ENCODE measurements at regions of chr17 and their contacts with region 1.

Region 1: DNA sequence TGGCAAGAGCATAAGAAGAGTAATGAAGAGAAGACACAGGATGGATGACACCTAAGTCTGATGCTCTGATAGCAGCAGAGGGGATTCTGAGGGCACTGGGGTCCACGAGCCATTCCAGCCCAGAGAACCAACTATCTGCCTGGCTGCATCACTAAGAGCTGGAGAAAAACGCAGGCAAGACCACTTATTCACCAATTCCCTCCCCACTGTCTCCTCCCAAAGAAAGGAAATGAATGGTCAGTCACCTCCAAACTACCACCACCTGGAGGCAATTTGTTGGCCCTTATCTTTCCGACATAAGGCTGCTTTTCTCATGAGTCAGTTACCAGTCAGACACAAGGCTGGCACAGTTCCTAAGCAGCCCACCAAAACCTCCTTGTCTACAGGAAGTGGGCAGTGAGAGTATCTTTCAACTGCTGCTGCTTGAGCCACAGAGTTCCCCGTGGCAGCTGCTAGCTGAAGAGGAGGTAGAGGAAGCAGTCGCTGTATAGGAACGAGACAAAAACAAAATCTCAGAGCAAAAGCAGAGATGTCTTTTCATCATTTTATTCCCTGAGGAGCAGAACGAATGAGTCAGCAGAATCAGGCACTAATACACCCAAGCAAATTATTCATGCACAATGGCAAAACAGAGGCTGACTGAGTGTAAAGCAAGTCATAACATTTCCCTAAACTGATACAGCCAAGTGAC is 111.1 kb downstream of the SMG6 start:
- DNase-seq: no peak
- H3K4me3 Mint-ChIP-seq: no peak overlapping the region
- H3K27ac Mint-ChIP-seq: peak overlapping the region; percentile 82
- H3K4me1 Mint-ChIP-seq: peaks cover 62% of the 10 kb centered on the region
- H3K27me3 Mint-ChIP-seq: no peaks in the 10 kb centered on the region

Region 2: DNA sequence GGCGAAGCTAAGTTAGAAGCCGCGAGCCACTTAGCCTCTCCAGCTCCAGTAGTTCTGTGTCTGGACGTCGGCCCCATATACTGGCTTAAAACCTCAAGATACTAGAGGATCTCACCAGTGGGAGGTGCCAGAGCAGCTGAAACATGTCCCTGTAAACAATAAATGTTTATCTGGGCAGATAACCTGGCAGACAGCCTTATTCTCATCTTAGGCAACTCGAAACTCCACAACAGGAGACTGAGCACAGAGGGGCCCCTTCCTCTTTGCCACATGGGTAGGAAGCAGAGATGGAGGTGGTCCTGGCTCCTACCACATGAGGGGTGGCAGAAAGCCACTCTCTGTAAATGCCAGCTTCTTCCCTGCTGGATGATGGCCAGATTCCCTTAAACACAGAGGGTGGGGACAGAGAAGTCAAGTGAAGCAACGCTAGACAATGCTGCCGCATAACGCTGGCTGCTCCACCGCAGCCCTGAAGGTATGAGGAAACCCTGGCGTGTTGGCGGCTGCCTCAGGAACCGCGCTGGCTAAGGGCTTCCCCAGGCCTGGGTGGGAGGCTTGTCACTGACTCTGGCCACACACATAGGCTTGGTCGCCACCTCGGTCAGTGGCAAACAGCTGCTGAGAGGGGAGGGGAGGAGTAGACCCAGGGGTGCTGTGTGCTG is 69.7 kb before region 1 on chr17:
- intact Hi-C with region 1: loop called (anchors 10 kb)
- DNase-seq: no peak
- H3K4me3 Mint-ChIP-seq: no peak overlapping the region
- H3K27ac Mint-ChIP-seq: peak overlapping the region; percentile 64
- H3K4me1 Mint-ChIP-seq: peaks cover 27% of the 10 kb centered on the region
- H3K27me3 Mint-ChIP-seq: no peaks in the 10 kb centered on the region

Region 3: GRCh38 chr17:2215616-2216364 is 23.3 kb after region 1 on chr17:
- intact Hi-C with region 1: loop called (anchors 2 kb)
- DNase-seq: peak; percentile 68
- H3K4me3 Mint-ChIP-seq: peak overlapping the region; percentile 76
- H3K27ac Mint-ChIP-seq: peak overlapping the region; percentile 96
- H3K4me1 Mint-ChIP-seq: peaks cover 49% of the 10 kb centered on the region
- H3K27me3 Mint-ChIP-seq: no peaks in the 10 kb centered on the region

Region 4: DNA sequence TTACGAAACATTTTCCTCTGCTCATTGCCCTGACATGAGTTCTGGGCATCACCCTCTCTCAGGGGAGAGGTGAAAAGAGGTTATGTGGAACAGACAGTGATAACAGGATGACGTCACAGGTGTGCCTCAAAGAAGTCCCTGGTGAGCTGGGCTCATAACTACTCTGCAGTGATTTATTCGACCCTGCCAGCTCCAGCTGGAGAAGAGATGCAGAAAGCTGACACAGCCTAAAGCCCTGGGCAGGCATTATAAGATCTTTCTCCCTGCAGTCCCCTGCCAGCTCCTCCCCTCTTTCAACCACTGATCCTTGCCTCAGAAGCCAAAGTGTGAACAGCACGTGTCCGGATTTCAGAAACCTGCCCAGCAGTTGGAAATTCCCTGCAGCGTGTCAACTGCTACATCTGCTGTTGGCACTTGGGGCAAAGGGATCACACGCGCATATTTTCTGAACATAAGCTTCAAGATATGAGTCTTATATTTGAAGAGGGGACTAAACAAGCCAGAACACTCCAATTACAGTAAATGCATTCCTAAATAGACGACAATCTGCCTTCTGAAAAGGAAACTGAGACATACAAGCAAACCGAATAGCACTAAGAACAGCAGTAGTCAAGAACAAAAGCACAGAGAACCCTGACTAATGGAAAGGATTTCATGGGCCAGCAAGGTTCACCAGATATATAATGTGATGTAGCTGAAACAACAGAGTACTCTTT is 30.5 kb after region 1 on chr17:
- intact Hi-C with region 1: loop called (anchors 1 kb)
- DNase-seq: no peak
- H3K4me3 Mint-ChIP-seq: no peak overlapping the region
- H3K27ac Mint-ChIP-seq: peak overlapping the region; percentile 61
- H3K4me1 Mint-ChIP-seq: peaks cover 42% of the 10 kb centered on the region
- H3K27me3 Mint-ChIP-seq: no peaks in the 10 kb centered on the region